AG04450 (cell line): ENCODE measurements at regions of chrX and their contacts with region 1.

Region 1: DNA sequence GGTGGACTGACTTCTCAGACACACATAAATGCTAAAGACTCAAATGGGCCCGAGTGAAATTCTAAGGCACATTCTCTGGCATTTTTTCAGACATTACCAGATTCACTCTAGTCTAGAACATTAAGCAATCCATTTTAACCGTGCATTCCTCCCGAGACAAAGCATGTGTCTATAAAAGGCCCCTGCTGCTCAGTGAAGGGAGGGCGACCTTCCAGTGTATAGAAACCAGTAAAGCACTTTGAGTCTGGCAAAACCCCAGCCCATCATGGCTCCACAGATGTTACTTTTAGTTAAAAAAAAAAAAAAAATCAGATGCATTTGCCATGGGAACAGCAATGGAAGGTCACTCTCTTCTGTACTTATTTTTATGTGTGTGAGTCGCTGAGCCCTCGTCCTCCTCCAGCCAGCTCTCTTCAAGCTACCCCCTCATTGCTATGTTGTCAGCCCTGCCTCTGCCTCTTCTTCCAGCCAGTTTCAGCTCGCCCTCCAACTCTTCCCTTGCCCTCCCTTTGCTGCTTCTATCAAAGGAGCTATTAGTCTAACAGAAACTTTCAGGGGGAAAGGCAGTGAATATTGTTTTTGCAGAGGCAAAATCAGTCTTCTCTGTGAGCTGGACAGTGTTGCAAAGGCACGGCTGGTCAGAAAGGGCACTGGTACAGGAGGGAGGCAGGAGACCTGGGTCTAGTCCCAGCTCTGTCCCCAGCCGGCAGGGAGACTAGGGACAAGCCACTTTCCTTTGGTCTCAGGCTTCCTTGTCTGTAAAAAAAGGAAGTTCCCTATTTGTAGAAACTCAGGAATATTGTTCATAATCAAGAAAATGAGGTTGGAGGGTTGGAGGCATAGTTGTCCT is 644.2 kb downstream of the ZNF674 start:
- DNase-seq: no peak
- H3K4me3 ChIP-seq: no peak overlapping the region
- H3K27ac ChIP-seq: no peak overlapping the region
- H3K27me3 ChIP-seq: peaks cover 2% of the 10 kb centered on the region
- CTCF ChIP-seq: no peak

Region 2: DNA sequence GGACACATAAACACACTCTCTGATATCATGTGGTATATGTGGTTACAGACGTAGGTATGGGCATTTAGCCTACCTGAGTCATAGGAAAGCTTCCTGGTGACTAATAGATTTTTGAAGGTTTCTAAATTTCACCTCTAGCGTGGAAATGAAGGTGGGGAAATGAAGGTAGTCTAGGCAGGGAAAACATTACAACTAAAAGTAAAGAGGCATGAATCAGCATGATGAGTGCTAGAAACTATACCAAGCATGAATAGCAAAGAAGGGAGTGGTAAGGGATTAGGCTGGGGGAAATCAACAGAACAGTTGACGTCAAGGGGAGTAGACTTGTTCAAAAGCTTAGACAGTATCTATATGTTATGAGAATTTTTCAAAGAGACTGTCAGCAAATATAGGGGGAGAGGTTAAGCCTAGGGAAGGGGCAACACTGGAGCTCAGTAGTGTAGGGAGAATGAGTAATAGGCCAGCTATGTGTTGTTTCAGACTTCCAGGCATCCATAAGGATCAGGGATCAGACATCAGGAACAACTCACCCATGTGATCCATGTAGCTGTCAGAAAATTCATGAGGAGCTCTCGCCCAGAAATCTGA is 421.1 kb before region 1 on chrX:
- CTCF ChIA-PET with region 1: no interaction called
- POLR2A ChIA-PET with region 1: interaction called, 10 read pairs
- DNase-seq: peak; percentile 59
- H3K4me3 ChIP-seq: no peak overlapping the region
- H3K27ac ChIP-seq: peak overlapping the region; percentile 93
- H3K27me3 ChIP-seq: no peaks in the 10 kb centered on the region
- CTCF ChIP-seq: no peak

Region 3: DNA sequence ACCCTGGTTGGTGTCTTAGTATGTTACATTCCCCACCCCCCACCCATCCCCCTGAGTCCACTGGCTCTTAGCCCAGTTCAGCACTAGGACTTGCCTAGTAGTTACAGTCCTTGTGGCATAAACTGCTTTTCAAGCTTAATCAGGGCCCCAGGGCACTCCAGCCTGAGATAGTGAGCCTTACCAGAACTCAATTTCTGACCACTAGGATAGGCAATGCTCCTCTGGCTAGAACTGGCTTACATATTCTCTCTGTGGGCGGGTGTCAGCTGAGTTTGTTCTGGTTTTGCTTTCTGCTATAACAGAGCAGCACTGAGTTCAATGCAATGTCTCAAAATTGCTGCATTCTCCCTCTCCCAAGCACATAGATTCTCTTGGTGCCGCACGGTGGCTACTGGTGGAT is 308.9 kb before region 1 on chrX:
- CTCF ChIA-PET with region 1: no interaction called
- POLR2A ChIA-PET with region 1: no interaction called
- DNase-seq: no peak
- H3K4me3 ChIP-seq: no peak overlapping the region
- H3K27ac ChIP-seq: no peak overlapping the region
- H3K27me3 ChIP-seq: no peaks in the 10 kb centered on the region
- CTCF ChIP-seq: no peak